ENCODE measurements at regions of chr7 and their contacts with region 1.

Region 1: GRCh38 chr7:786472-787255 is 45.6 kb upstream of the SUN1 start:
- DNase-seq: peak; percentile 33 to 85 (median 68)

Region 2: GRCh38 chr7:876167-876967 is 89.7 kb after region 1 on chr7 and contains the start of gene GET4:
- intact Hi-C with region 1: loop called (anchors 10 kb)
- DNase-seq: peak; percentile 95 to 100 (median 98)